A673 (cell line): ENCODE measurements at regions of chr14 and their contacts with region 1.

Region 1: DNA sequence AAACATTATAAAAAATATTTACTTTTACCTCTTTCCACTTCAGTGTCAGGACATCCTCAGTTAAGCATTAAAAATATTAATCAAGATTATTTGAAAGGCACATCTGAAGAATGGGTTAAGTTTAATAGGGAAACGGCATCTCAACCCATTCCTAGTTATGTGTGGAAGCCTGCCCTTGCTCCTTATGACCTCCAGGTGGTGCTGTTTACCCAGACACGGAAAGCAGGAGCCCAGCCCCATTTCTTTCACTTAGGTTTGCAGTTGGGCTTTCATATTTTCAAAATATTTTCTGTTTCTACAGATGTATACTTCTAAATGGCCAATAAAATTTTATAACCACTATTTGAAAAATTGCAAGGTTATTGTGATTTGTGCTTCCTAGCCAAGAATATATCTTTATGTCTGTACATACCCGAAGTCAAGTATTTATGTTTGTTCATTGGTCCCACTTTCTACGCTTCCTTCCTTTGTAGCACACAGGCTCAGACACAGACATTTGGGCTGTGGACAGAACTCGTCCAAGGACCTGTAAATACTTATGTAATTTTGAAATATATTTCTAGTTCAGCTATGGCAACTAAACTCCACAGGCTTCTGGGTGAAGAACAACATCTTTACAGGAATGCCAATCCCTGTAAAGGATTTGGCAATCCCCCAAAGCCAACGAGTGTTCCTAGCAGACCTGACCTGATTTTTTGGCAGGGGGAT is 247.1 kb downstream of the AKAP6 start:
- DNase-seq: peak; percentile 75
- H3K4me3 ChIP-seq: no peak overlapping the region
- H3K27ac ChIP-seq: no peak overlapping the region
- H3K4me1 ChIP-seq: peaks cover 21% of the 10 kb centered on the region
- H3K27me3 ChIP-seq: no peaks in the 10 kb centered on the region
- CTCF ChIP-seq: peak; percentile 96

Region 2: DNA sequence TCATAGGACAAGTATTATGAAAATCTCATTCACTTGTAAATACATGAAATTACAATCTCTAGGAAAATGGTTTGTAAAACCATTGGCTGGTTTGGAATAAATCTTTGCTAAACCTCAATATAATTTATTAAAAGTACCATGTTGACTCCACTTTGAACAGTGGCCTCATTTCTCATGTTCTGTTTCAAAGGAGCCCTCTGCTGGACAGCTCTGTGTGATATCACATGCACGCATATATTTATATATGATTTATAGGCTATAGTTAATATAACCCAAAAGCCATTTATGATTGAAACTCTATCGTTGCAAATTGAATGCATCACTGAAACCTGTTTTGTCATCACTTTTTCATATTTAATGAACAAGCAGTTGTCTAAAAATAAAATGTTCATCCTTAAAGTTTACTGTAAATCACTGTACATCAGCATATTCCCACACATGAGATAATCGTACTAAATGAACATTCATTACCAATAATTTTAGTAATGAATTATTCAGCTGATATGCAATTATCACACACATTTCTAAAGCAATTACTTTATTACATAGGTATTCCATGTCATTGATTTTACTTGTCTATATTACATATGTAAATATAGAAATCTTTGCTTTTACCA is 856.3 kb after region 1 on chr14:
- CTCF ChIA-PET with region 1: no interaction called
- POLR2A ChIA-PET with region 1: no interaction called
- intact Hi-C with region 1: loop called (anchors 5 kb)
- DNase-seq: peak; percentile 69
- H3K4me3 ChIP-seq: no peak overlapping the region
- H3K27ac ChIP-seq: no peak overlapping the region
- H3K4me1 ChIP-seq: peaks cover 9% of the 10 kb centered on the region
- H3K27me3 ChIP-seq: no peaks in the 10 kb centered on the region
- CTCF ChIP-seq: peak; percentile 81

Region 3: GRCh38 chr14:34300882-34301734 is 1724.9 kb after region 1 on chr14:
- CTCF ChIA-PET with region 1: no interaction called
- POLR2A ChIA-PET with region 1: no interaction called
- intact Hi-C with region 1: loop called (anchors 5 kb)
- DNase-seq: peak; percentile 67
- H3K4me3 ChIP-seq: no peak overlapping the region
- H3K27ac ChIP-seq: no peak overlapping the region
- H3K4me1 ChIP-seq: no peaks in the 10 kb centered on the region
- H3K27me3 ChIP-seq: no peaks in the 10 kb centered on the region
- CTCF ChIP-seq: peak; percentile 74

Region 4: GRCh38 chr14:34322940-34323418 is 1746.7 kb after region 1 on chr14:
- CTCF ChIA-PET with region 1: no interaction called
- POLR2A ChIA-PET with region 1: no interaction called
- intact Hi-C with region 1: loop called (anchors 5 kb)
- DNase-seq: peak; percentile 79
- H3K4me3 ChIP-seq: no peak overlapping the region
- H3K27ac ChIP-seq: no peak overlapping the region
- H3K4me1 ChIP-seq: no peaks in the 10 kb centered on the region
- H3K27me3 ChIP-seq: no peaks in the 10 kb centered on the region
- CTCF ChIP-seq: peak; percentile 85